CD8-positive, alpha-beta T cell (primary cell): ENCODE measurements at regions of chr9 and their contacts with region 1.

Region 1: DNA sequence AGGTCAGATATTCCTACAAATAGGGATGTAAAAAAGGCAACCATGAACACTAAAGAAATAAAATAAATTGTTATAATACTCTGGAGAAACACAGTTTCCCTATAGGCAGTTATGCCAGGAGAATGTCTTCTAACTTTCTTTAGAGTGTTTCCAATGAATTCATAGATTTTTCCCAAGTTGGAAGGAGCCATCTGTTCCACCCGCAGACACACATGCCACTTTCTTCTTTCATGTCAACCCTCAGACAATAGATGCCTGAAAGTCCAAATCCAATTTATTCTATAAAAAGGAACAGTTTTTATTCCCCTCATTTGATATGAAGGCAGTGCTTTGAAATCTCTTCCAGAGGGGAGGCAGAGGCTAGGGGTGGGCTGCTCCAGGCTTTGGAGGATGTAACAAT is 418.1 kb downstream of the ACTL7B start:
- DNase-seq: no peak
- ATAC-seq: no peak
- H3K4me3 ChIP-seq: no peak overlapping the region
- H3K4me3 Mint-ChIP-seq: no peak overlapping the region
- H3K27ac ChIP-seq: no peak overlapping the region
- H3K27ac Mint-ChIP-seq: no peak overlapping the region
- H3K4me1 ChIP-seq: no peaks in the 10 kb centered on the region
- H3K4me1 Mint-ChIP-seq: no peaks in the 10 kb centered on the region
- H3K27me3 ChIP-seq: no peaks in the 10 kb centered on the region
- H3K27me3 Mint-ChIP-seq: no peaks in the 10 kb centered on the region
- CTCF ChIP-seq: no peak

Region 2: DNA sequence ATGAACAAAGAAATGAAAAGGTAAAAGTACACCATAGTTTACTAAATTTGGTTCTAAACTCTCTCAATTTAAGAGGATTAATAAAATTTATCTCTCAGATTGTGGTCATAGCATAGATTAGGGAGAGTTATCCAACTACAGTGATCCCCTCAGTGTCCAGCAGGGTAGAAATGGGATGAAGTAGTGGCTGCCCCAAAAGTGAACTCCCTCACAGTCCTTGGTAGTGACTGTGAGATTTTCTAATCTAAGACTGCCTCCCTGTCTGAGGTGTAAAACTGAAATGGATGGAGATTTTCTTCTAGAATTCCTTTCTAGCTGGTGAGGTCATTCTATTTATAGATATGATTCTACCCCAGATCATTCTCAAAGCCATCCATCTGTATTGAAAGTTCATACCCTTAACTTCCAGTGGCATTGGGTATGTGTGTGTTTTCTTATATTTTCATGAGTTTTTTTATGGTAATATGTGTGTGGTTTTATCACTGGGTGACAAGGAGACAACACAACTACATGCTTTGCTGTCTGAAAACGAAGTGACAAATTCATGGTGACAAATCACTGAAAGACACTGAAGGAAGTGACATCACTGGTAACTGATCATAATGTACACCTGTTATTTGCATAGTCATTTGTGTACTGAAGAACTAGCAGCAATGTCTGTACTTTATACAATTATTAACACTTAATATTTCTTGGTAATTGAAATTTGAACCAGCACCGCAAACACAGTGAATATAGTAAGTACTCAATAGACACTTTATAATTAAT is 37.2 kb before region 1 on chr9:
- CTCF ChIA-PET with region 1: no interaction called
- POLR2A ChIA-PET with region 1: no interaction called
- intact Hi-C with region 1: loop called in 1 of 2 experiments (anchors 1 kb)
- DNase-seq: no peak
- ATAC-seq: no peak
- H3K4me3 ChIP-seq: no peak overlapping the region
- H3K4me3 Mint-ChIP-seq: no peak overlapping the region
- H3K27ac ChIP-seq: no peak overlapping the region
- H3K27ac Mint-ChIP-seq: no peak overlapping the region
- H3K4me1 ChIP-seq: no peaks in the 10 kb centered on the region
- H3K4me1 Mint-ChIP-seq: no peaks in the 10 kb centered on the region
- H3K27me3 ChIP-seq: no peaks in the 10 kb centered on the region
- H3K27me3 Mint-ChIP-seq: no peaks in the 10 kb centered on the region
- CTCF ChIP-seq: no peak

Region 3: GRCh38 chr9:108412755-108413154 is 24.9 kb before region 1 on chr9:
- CTCF ChIA-PET with region 1: no interaction called
- POLR2A ChIA-PET with region 1: no interaction called
- intact Hi-C with region 1: no loop called
- DNase-seq: no peak
- ATAC-seq: no peak
- H3K4me3 ChIP-seq: no peak overlapping the region
- H3K4me3 Mint-ChIP-seq: no peak overlapping the region
- H3K27ac ChIP-seq: no peak overlapping the region
- H3K27ac Mint-ChIP-seq: no peak overlapping the region
- H3K4me1 ChIP-seq: no peaks in the 10 kb centered on the region
- H3K4me1 Mint-ChIP-seq: no peaks in the 10 kb centered on the region
- H3K27me3 ChIP-seq: no peaks in the 10 kb centered on the region
- H3K27me3 Mint-ChIP-seq: peaks cover 2% of the 10 kb centered on the region
- CTCF ChIP-seq: no peak

Region 4: DNA sequence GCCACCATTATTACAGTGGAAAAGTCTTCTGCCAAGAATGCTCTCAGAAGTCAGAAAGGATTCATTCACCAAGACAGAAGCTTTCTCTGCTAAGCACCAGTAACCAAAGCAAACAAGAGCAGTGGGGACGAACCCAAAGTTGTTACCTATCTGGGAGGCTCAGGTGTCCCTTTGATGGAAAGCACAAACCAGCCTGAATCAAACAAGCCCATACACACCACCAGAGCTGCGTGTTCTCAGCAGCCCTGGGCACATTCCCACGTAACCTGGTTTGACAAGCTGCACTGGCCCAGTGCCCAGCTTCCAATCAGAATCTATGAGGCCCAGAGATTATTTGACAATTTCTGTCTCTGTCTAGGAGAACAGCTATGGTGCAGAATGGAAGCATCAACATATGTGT is 165.5 kb after region 1 on chr9:
- CTCF ChIA-PET with region 1: no interaction called
- POLR2A ChIA-PET with region 1: no interaction called
- intact Hi-C with region 1: no loop called
- DNase-seq: no peak
- ATAC-seq: no peak
- H3K4me3 ChIP-seq: no peak overlapping the region
- H3K4me3 Mint-ChIP-seq: no peak overlapping the region
- H3K27ac ChIP-seq: no peak overlapping the region
- H3K27ac Mint-ChIP-seq: no peak overlapping the region
- H3K4me1 ChIP-seq: no peaks in the 10 kb centered on the region
- H3K4me1 Mint-ChIP-seq: no peaks in the 10 kb centered on the region
- H3K27me3 ChIP-seq: no peaks in the 10 kb centered on the region
- H3K27me3 Mint-ChIP-seq: no peaks in the 10 kb centered on the region
- CTCF ChIP-seq: no peak